ENCODE measurements at regions of chr1 and their contacts with region 1.

Region 1: DNA sequence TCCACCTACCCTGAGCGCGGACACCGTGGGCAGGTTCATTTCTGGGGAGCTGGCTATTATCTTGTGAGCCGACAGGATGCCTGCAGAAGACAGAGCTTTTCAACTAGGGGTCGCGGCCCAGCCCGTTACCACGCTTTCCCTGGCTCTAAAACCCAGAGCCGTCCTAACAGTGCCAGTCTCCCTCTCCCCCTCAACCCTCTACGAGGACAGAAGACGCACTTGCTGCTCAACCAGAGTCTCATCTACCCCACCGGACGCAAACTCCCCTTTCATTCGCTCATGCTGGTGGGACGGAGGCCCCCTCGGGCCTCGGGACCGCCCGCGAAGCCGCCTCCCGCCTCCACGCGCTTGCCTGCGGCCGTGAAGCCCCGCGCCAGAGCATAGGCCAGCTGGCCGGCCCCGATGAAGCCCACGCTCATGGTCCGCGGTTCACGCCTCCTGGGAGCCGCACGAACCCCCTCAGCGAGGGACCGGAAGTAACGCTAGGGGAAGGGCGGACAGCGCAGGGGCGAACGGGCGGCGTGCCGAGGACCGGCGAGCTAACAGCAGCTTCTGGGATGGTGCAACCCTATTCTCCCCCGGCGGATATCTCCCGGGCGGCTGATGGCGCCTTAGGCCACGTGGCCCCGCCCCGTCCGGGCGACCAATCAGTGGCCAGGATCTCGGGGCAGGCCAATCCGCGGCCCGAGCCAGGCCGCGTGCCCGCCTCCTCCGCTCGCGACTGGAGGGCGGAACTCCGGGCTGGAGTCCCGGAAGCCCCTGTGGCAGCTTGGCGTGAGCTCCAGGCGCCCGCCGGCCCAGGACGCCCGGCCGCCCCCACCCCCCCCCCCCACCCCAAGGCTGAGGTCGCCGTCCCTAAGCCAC is at the start of gene PYCR2:
- DNase-seq: peak; percentile 100

Region 2: DNA sequence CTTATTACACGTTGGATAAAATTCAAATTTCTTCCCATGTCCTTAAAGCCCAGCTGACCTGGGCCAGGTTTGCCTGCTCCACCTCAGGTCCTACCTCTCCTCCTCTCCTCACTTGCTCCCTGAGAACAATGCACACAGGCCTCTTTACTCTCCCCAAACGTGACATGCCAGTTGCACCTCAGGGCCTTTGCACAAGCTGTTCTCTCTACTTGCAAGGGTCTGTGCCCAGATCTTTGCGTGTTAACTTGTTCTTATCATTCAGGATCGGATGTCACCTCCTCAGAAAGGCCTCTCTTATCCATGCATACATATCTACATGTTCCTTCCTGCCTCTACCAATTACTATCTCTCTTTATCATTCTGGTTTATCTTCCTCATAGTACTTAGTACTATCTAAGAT is 20.3 kb before region 1 on chr1:
- CTCF ChIA-PET with region 1: no interaction called
- POLR2A ChIA-PET with region 1: interaction called, 16 read pairs
- DNase-seq: no peak

Region 3: DNA sequence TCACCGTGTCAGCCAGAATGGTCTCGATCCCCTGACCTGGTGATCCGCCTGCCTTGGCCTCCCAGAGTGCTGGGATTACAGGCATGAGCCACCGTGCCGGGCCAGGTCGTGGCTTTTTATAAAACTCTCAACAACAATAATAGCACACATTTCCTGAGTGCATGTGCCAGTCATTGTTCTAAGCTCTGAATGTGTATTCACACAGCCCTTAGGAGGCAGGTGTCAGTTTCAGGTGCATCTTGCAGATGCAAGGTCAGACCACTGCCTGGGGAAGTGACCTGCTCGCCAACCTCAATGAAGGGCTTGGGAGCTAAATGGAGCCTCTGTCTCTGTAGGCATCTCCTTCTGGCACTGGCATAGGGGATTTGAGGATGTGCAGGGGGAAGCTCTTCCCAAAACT is 18.6 kb after region 1 on chr1:
- CTCF ChIA-PET with region 1: no interaction called
- POLR2A ChIA-PET with region 1: interaction called, 38 read pairs
- DNase-seq: no peak

Region 4: DNA sequence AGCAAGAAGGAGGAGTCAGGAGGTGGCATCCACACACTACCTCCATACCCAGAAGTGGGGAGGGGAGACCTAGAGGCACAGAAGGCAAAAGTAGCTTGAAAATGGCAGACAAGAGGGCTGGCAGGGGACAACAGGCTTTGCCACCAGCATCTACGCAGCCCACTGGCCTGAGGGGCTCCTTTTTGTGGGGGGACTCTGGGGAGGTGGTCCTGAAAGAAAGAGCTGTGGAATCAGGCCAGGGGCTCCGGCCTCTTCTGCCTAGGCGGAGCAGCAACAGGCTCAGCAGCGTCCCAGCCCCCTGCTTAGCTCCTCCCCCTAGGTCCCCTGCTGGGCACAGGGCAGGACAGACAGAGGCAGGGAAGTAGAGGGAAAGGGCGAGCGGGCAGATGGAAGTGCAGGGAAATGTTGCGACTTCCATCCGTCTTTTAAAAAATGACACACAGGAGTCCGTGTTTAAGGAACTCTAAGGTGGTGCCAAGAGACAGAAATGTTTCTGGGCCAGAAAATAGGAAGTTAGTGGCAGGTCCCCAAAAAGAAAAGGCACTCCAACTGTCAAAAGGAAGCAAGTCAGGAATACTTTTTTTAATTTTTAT is 27.1 kb after region 1 on chr1:
- CTCF ChIA-PET with region 1: no interaction called
- POLR2A ChIA-PET with region 1: interaction called, 10 read pairs
- DNase-seq: peak; percentile 76